Activated naive CD4-positive, alpha-beta T cell treated with anti-CD3 and anti-CD28 coated beads for 36 hours (primary cell): ENCODE measurements at regions of chr2 and their contacts with region 1.

Region 1: GRCh38 chr2:74482801-74483674 is at the starts of genes CCDC142 and TTC31:
- DNase-seq: peak; percentile 97
- H3K4me3 Mint-ChIP-seq: peak within 1 kb of the TSS; percentile 93
- H3K27ac Mint-ChIP-seq: peak within 1 kb of the TSS; percentile 98
- H3K4me1 Mint-ChIP-seq: peaks cover 32% of the 10 kb centered on the region
- H3K27me3 Mint-ChIP-seq: no peaks in the 10 kb centered on the region
- total RNA-seq, gene CCDC142: 3.7 to 5.8 TPM
- total RNA-seq, gene TTC31: 29.5 to 30.6 TPM

Region 2: DNA sequence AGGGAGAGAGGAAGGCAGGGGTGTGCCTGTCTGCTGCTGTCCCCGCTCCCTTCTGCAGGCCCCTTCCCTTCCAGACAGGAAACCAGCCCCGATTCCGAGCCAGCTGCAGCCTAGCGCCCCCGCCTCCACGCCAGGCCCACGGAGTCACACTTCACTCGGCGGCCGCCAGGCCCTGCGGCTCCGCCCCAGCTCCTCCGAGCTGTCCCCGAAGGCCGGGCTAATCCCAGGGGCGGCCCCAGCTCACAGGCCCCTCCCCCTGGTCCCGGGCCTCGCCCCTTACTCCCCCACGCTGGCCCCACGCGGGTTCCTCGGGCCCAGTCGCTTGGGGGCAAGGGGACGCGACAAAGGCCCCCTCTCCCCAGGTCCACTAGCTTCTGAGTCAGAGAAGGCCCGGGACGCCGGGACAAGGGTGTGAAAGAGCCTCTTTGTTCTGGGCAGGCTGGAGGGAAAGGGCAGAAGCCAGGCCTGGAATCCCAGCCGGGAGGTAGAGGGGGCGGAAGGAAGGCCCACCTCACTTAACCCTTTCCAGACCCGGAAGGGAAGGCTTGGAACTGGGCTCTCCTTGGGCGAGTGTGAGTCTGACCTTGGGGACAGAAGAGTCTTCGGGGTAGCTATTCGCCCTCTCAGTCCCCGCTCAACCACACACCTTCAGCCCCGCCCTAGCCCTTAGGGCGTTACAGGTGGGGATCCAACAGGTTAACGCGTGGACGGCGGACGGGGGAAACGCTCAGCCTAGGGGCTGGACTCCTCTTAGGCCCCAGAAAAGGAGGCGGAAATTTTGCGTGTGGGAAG is 42.5 kb before region 1 on chr2:
- CTCF ChIA-PET with region 1: no interaction called
- intact Hi-C with region 1: loop called (anchors 1 kb)
- DNase-seq: peak; percentile 65
- H3K4me3 Mint-ChIP-seq: peak overlapping the region; percentile 22
- H3K27ac Mint-ChIP-seq: no peak overlapping the region
- H3K4me1 Mint-ChIP-seq: peaks cover 15% of the 10 kb centered on the region
- H3K27me3 Mint-ChIP-seq: peaks cover 37% of the 10 kb centered on the region

Region 3: GRCh38 chr2:74507145-74507925 is 24.3 kb after region 1 on chr2 and contains the start of gene PCGF1:
- CTCF ChIA-PET with region 1: interaction called, 14 read pairs
- intact Hi-C with region 1: loop called (anchors 1 kb)
- DNase-seq: peak; percentile 99
- H3K4me3 Mint-ChIP-seq: peak within 1 kb of the TSS; percentile 91
- H3K27ac Mint-ChIP-seq: peak within 1 kb of the TSS; percentile 98
- H3K4me1 Mint-ChIP-seq: peaks cover 40% of the 10 kb centered on the region
- H3K27me3 Mint-ChIP-seq: peaks cover 41% of the 10 kb centered on the region
- total RNA-seq, gene PCGF1: 21.1 to 24.4 TPM

Region 4: GRCh38 chr2:74573747-74574562 is 90.9 kb after region 1 on chr2:
- CTCF ChIA-PET with region 1: interaction called, 7 read pairs
- intact Hi-C with region 1: loop called (anchors 1 kb)
- DNase-seq: peak; percentile 52
- H3K4me3 Mint-ChIP-seq: peak overlapping the region; percentile 38
- H3K27ac Mint-ChIP-seq: peak overlapping the region; percentile 68
- H3K4me1 Mint-ChIP-seq: peaks cover 34% of the 10 kb centered on the region
- H3K27me3 Mint-ChIP-seq: no peaks in the 10 kb centered on the region

Region 5: DNA sequence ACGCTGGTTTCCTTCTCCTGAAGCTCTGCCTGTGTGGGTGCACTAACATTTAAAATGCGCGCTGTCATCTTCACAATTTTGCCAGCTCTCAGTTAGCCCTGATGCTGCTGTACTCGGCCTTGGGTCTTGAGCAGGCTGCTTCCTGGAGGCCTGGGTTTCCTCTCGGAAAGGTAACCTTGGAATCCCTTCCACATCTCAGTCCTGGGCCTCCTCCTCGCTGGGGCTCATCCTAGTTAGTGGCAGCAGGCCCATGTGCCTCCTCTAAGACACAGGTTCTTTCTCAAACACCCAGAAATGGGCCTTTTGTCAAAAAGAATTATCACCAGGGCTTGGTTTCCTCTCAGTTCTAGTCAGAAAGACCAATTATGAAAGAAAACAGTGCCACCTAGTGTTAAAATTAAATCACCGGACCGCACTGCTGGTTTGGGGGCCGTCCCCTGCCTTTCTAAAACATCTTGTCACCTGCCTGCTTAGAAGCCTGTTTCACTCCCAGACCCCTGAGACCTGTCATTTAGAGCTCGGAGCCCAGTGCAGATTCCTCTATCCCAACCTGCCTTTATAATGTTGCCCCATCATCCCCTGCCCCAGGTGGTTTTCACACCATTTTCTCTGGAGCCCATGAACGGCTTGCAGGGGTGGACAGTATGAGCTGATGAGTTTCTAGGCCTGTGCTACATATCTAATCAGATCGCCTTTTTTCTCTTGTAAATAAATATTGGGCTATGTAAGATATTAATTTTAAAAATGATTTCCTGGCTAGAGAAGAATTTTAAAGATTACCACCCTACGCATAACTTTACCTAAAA is 393.2 kb after region 1 on chr2:
- CTCF ChIA-PET with region 1: no interaction called
- intact Hi-C with region 1: loop called (anchors 1 kb)
- DNase-seq: peak; percentile 62
- H3K4me3 Mint-ChIP-seq: no peak overlapping the region
- H3K27ac Mint-ChIP-seq: no peak overlapping the region
- H3K4me1 Mint-ChIP-seq: no peaks in the 10 kb centered on the region
- H3K27me3 Mint-ChIP-seq: no peaks in the 10 kb centered on the region